ENCODE measurements at regions of chr16 and their contacts with region 1.

Region 1: DNA sequence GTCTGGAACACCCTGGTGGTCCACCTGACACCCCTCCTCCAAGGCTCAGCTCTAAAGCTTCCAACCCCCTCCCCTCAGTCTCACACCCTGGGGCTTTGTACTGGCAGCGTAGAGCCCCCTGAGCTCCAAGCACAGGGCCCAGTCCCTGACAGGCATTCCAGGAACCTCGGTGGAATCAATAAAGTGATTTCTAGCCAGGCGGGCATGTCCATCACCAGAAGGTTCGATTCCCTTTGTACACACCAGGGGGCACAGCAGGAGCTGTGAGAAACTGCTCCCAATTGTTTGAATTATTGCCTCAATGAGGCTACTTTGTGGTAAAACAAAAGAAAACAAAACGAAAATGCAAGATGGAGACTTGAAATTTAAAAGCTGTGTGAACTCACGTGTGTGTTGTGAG is 51.8 kb downstream of the SMPD3 start:
- DNase-seq: peak in 1 of 5 donors; percentile 30
- ATAC-seq: peak in 1 of 4 donors; percentile 24
- H3K4me3 ChIP-seq: no peak overlapping the region
- H3K27ac ChIP-seq: no peak overlapping the region
- H3K4me1 ChIP-seq: no peaks in the 10 kb centered on the region
- H3K27me3 ChIP-seq: no peaks in the 10 kb centered on the region
- CTCF ChIP-seq: peak; percentile 42 to 67 (median 51)
- POLR2A ChIP-seq: no peak

Region 2: GRCh38 chr16:68229431-68230198 is 166.9 kb before region 1 on chr16:
- intact Hi-C with region 1: no loop called
- DNase-seq: peak in 2 of 5 donors; percentile 29 to 46
- ATAC-seq: peak; percentile 11 to 55 (median 36)
- H3K4me3 ChIP-seq: no peak overlapping the region
- H3K27ac ChIP-seq: peak overlapping the region in 2 of 12 donors; percentile 4 to 14
- H3K4me1 ChIP-seq: peaks cover 0 to 30% (median 15%) of the 10 kb centered on the region in 12 donors
- H3K27me3 ChIP-seq: no peaks in the 10 kb centered on the region
- CTCF ChIP-seq: peak; percentile 80 to 94 (median 90)
- POLR2A ChIP-seq: no peak

Region 3: DNA sequence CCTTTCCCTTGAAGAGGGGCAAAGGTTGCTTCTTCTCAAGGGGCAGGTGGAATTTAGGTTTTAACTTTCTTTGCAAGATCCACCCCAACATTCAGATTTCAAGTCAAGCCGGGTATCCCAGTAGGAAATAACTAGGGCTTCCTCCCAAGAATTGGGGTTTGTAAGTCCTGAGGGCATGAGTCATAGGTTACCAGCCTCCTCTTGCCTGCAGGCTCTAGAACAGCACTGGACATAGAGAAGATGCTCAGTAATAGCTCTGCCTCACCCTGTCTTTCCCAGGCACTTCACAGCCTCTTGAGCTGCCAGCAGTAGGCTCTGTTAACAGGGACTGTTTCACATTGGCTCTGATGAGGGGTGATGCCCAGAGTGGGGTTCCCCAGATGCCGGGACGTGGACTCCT is 106.9 kb after region 1 on chr16:
- intact Hi-C with region 1: loop called in 3 of 10 experiments (anchors 2 to 10 kb)
- DNase-seq: no peak
- ATAC-seq: no peak
- H3K4me3 ChIP-seq: no peak overlapping the region
- H3K27ac ChIP-seq: no peak overlapping the region
- H3K4me1 ChIP-seq: no peaks in the 10 kb centered on the region
- H3K27me3 ChIP-seq: no peaks in the 10 kb centered on the region
- CTCF ChIP-seq: no peak
- POLR2A ChIP-seq: no peak

Region 4: DNA sequence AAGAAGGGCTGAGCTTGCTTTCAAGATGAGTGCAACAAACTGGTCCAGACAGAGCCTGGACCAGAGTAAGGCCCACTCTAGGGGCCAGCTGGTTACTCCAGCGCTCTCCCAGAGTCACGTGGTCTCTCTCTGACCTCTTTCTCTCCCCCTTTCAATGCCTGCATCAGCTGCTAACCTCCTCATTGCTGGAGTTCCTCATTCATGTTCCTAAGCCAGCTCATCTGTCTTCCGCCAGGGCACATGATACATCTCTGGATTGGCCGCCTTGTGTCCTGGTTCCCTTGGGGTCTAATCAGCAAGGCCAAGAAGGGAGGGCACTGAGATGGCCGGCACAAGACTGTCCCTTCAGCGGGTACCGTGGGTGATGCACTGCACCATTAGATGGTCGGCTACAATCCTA is 115.7 kb after region 1 on chr16:
- intact Hi-C with region 1: loop called (anchors 1 to 10 kb)
- DNase-seq: no peak
- ATAC-seq: no peak
- H3K4me3 ChIP-seq: no peak overlapping the region
- H3K27ac ChIP-seq: no peak overlapping the region
- H3K4me1 ChIP-seq: peaks cover 0 to 14% (median 2%) of the 10 kb centered on the region in 12 donors
- H3K27me3 ChIP-seq: peaks cover 0 to 9% (median 0%) of the 10 kb centered on the region in 9 donors
- CTCF ChIP-seq: no peak
- POLR2A ChIP-seq: no peak

Measured in heart left ventricle (tissue), 16 donors.